ENCODE measurements at regions of chr2 and their contacts with region 1.

Region 1: DNA sequence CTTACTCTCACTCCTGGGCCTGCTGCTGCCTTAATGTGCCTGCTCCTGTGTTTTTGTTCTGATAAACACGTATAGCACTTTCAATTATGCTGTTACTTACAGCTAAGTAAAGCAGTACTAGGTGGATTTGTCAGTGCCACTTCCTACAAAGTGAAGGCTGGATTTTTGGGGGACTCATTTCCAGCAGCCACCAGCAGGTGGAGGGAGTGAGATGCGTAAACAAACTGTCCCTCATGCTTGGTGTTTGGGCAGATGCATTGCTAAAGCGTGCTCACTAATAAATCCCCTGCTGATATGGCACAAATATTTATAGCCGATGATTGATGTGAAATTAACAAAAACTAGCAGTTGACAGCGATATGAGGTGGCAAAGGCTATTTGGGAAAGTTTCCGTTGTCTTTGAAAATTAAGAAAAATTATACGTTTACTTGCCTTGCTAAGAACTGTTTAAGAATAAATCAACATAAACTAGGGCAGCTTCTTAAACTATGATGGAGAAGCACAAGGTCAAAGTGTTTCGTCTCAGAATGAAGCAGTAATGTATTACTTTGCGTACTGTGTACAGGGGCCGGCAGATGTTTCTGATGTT is 101.7 kb downstream of the AGAP1 start:
- DNase-seq: peak; percentile 69 to 73
- ATAC-seq: peak; percentile 57 to 85 (median 71)
- H3K4me3 ChIP-seq: no peak overlapping the region
- H3K27ac ChIP-seq: no peak overlapping the region
- H3K4me1 ChIP-seq: peaks cover 0 to 14% (median 8%) of the 10 kb centered on the region in 9 donors
- H3K27me3 ChIP-seq: no peaks in the 10 kb centered on the region
- CTCF ChIP-seq: peak; percentile 68 to 91 (median 87)

Region 2: GRCh38 chr2:235263205-235264122 is 332.1 kb before region 1 on chr2:
- intact Hi-C with region 1: loop called in 1 of 10 experiments (anchors 10 kb)
- DNase-seq: peak; percentile 75 to 82
- ATAC-seq: peak; percentile 77 to 93 (median 89)
- H3K4me3 ChIP-seq: peak overlapping the region in 2 of 10 donors; percentile 8 to 15
- H3K27ac ChIP-seq: peak overlapping the region in 9 of 10 donors; percentile 28 to 72 (median 55)
- H3K4me1 ChIP-seq: peaks cover 0 to 17% (median 4%) of the 10 kb centered on the region in 9 donors
- H3K27me3 ChIP-seq: peaks cover 0 to 33% (median 21%) of the 10 kb centered on the region in 7 donors
- CTCF ChIP-seq: no peak

Region 3: DNA sequence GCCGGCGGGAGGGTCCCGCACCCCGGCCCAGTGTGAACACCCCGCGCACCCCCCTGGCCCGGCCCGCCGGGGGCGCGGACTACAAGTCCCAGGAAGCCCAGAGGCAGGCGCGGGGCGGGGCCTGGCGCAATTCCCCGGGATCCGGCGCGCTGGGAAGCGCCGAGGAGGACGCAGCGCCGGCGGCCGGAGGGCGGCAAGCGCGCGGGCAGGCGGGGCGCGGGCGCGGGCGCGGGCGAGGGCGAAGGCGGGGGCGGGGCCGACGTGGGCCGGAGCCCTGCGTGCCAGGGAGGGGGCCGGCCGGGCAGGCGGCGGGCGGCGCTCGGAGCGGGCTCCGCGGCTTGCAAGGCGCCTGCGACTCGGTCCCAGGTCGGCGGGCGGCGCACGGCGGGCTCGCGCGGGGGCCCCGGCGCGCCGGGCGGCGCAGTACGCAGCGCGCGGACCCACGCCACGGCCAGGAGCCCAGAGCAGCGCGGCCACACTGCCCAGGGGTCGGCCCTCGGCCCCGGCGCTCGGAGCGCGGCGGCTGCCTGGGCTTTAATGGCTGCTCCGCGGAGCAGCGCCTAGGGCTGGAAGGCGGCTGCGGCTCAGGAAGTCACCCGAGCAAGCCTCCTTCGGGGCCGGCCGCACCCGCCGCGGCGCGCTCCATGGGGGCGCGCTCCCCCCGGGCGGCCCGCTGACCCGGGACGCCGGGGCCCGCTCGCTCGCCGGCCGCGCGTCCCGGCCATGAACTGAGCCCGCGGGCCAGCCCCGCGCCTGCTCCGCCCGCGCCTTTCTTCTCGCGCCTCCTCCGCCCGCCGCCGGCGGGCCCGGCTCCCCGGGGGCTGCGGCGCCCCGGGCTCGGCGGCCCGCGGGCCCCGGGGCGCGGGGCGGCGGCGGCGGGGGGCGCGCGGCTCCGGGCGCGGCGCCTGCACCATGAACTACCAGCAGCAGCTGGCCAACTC is 101.5 kb before region 1 on chr2 and contains the start of gene AGAP1:
- intact Hi-C with region 1: loop called in 2 of 10 experiments (anchors 5 kb)
- DNase-seq: peak; percentile 87 to 92
- ATAC-seq: peak; percentile 87 to 93 (median 92)
- H3K4me3 ChIP-seq: peak within 1 kb of the TSS; percentile 54 to 90 (median 68)
- H3K27ac ChIP-seq: peak within 1 kb of the TSS; percentile 44 to 87 (median 82)
- H3K4me1 ChIP-seq: peaks cover 8 to 42% (median 25%) of the 10 kb centered on the region in 9 donors
- H3K27me3 ChIP-seq: peaks cover 0 to 36% (median 0%) of the 10 kb centered on the region in 7 donors
- CTCF ChIP-seq: peak in 1 of 9 donors; percentile 9
- total RNA-seq, gene AGAP1: 17.5 to 29.2 (median 20.4) TPM

Region 4: DNA sequence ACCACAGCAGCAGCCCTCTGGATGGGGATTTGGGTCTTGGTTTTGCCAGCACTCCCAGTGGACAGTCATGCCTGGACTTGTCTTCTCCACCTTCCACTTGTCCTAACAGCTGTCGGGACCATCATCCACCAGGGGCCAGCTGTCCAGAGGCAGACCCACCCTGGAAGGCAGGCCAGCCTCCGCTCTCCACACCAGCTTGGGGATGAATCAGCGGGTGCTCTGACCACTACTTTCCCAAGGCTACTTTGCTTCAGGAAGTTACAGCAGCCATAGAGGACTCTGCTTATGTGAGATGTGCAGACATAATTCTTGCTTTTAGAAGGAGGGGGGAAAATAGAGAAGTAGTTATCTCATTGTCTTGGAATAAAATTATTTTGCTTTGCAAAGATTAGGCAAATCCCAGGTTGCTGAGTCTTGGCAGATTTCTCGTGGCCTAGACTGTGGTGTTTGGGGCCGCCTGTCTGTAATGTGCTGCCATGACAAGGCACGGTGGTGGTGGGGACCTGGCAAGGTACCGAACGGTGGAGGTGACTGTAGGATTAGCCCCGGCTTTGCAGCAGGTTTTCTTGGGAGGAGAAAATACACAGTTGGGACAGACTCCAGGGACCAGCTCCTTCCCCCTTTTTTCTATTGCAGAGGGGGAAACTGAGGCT is 47.1 kb after region 1 on chr2:
- intact Hi-C with region 1: loop called in 2 of 10 experiments (anchors 2 to 5 kb)
- DNase-seq: peak; percentile 33 to 38
- ATAC-seq: peak; percentile 10 to 72 (median 36)
- H3K4me3 ChIP-seq: no peak overlapping the region
- H3K27ac ChIP-seq: peak overlapping the region in 6 of 10 donors; percentile 23 to 79 (median 50)
- H3K4me1 ChIP-seq: peaks cover 17 to 76% (median 46%) of the 10 kb centered on the region in 9 donors
- H3K27me3 ChIP-seq: no peaks in the 10 kb centered on the region
- CTCF ChIP-seq: peak in 8 of 9 donors; percentile 17 to 51 (median 34)

Region 5: GRCh38 chr2:235746257-235747084 is 151.0 kb after region 1 on chr2:
- intact Hi-C with region 1: loop called (anchors 1 to 5 kb)
- DNase-seq: peak in 1 of 2 donors; percentile 64
- ATAC-seq: peak; percentile 77 to 94 (median 90)
- H3K4me3 ChIP-seq: no peak overlapping the region
- H3K27ac ChIP-seq: no peak overlapping the region
- H3K4me1 ChIP-seq: peaks cover 0 to 12% (median 0%) of the 10 kb centered on the region in 9 donors
- H3K27me3 ChIP-seq: no peaks in the 10 kb centered on the region
- CTCF ChIP-seq: peak; percentile 67 to 87 (median 73)

Measured in heart right ventricle (tissue), 16 donors.